HCT116 (cell line): ENCODE measurements at regions of chr10 and their contacts with region 1.

Region 1: GRCh38 chr10:103069453-103070331 is 123.4 kb downstream of the NT5C2 start:
- DNase-seq: peak; percentile 59
- ATAC-seq: peak; percentile 93
- H3K4me3 ChIP-seq: no peak overlapping the region
- H3K27ac ChIP-seq: no peak overlapping the region
- H3K4me1 ChIP-seq: peaks cover 3 to 6% of the 10 kb centered on the region in 2 experiments; a peak in 1 of 4 replicates
- H3K27me3 ChIP-seq: no peaks in the 10 kb centered on the region
- CTCF ChIP-seq: peak; percentile 75 to 98 (median 94)
- POLR2A ChIP-seq: no peak
- RAD21 ChIP-seq: peak; percentile 98

Region 2: DNA sequence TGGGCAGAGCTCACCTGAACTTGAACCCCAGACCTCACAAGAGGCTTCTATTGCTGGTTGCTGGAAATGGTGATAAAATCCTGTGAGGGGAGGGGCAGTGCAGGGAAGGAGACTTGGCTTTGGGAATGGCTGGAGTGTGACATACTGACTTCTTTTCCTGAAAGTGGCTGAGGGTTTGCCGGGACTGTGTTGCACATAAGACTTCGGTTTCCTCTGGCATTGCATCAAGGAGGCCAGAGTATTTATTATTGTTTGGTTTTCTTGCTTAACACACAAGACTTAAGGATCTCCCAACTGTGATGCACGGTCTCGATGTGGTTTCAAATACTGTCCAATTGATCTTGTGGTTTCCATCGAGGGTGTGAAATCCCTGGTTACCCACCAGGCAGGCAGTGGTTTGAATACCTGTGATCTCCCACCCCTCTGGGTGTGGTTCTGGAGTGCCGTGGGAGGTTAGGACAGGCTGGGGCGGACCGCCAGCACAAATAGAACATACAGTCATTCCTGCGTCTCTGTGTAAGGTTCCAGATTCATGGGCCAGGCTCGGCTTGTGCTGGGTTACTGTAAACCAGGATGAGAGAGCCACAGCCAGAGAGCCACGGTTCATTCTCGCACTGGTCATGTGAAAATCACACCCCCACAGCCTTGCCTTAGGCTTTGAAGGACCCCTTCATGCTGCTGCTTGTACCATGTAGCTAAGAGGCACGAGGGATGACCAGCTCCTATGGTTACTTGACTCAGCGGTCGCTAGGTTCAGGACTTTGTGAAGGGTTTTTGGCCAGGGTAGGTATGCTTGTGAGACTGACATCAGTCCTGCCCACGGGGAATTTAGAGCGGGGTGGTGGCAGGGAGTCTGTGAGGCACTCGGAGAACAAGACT is 286.8 kb before region 1 on chr10:
- CTCF ChIA-PET with region 1: no interaction called
- POLR2A ChIA-PET with region 1: no interaction called
- RAD21 ChIA-PET with region 1: no interaction called
- intact Hi-C with region 1: no loop called
- DNase-seq: no peak
- ATAC-seq: no peak
- H3K4me3 ChIP-seq: no peak overlapping the region
- H3K27ac ChIP-seq: no peak overlapping the region
- H3K4me1 ChIP-seq: no peaks in the 10 kb centered on the region; a peak in 1 of 4 replicates
- H3K27me3 ChIP-seq: no peaks in the 10 kb centered on the region
- CTCF ChIP-seq: no peak
- POLR2A ChIP-seq: no peak
- RAD21 ChIP-seq: no peak

Region 3: GRCh38 chr10:102835007-102835482 is 234.6 kb before region 1 on chr10:
- CTCF ChIA-PET with region 1: no interaction called
- POLR2A ChIA-PET with region 1: no interaction called
- RAD21 ChIA-PET with region 1: interaction called in 1 of 2 experiments, 3 read pairs
- intact Hi-C with region 1: loop called (anchors 1 kb)
- DNase-seq: peak; percentile 77
- ATAC-seq: peak; percentile 100
- H3K4me3 ChIP-seq: no peak overlapping the region
- H3K27ac ChIP-seq: no peak overlapping the region
- H3K4me1 ChIP-seq: no peaks in the 10 kb centered on the region; a peak in 1 of 4 replicates
- H3K27me3 ChIP-seq: no peaks in the 10 kb centered on the region; the same call in 1 of the 2 replicates
- CTCF ChIP-seq: peak; percentile 92 to 99 (median 93)
- POLR2A ChIP-seq: no peak
- RAD21 ChIP-seq: peak; percentile 98